ENCODE measurements at regions of chr22 and their contacts with region 1.

Region 1: DNA sequence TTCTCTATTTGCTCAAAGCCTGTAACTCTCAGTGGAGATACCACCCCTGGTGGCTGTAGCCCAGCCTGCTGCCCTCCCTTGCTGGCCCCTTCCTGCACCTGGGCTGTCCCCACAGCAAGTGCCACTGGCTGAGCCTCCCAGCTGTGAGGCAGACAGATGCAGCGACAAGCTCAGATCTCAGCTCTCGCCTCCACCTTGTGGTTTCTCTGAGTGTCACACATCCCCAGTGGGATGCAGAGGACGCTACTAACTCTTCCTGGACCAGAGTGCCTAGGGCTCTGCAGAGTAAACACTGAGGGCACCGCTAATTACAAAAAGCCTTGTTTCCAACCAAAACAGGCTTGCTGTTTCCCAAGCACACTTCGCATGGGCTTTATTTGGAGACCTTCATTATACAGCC is 8.9 kb downstream of the YPEL1 start:
- DNase-seq: peak; percentile 59
- ATAC-seq: peak; percentile 91
- H3K4me3 ChIP-seq: no peak overlapping the region
- H3K27ac ChIP-seq: no peak overlapping the region
- H3K4me1 ChIP-seq: no peaks in the 10 kb centered on the region
- H3K27me3 ChIP-seq: no peaks in the 10 kb centered on the region
- CTCF ChIP-seq: peak; percentile 61

Region 2: GRCh38 chr22:21712894-21713712 is 13.5 kb before region 1 on chr22:
- CTCF ChIA-PET with region 1: no interaction called
- POLR2A ChIA-PET with region 1: no interaction called
- intact Hi-C with region 1: loop called (anchors 2 kb)
- DNase-seq: peak; percentile 73
- ATAC-seq: peak; percentile 83
- H3K4me3 ChIP-seq: peak overlapping the region; percentile 19; the same call in 1 of the 2 replicates
- H3K27ac ChIP-seq: no peak overlapping the region
- H3K4me1 ChIP-seq: peaks cover 27% of the 10 kb centered on the region
- H3K27me3 ChIP-seq: no peaks in the 10 kb centered on the region
- CTCF ChIP-seq: peak; percentile 81

Region 3: DNA sequence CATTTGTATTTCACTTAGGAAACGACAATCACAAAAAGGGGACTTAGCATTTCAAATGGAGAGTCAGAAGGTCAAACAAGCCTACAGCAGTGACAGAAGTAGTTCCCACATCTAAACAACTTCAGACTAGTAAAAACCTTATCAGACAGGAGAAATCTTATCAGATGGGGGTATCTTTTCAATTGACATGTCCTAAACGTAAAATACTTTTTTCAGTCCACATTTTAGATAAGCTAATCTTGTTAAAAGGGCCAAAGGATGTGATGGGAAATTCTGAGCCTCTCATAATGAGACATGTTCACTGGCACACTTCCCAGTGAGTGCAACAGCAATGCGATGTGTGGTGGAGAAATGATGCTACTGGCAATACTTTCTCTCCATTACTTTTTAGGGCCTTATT is 138.4 kb after region 1 on chr22:
- CTCF ChIA-PET with region 1: no interaction called
- POLR2A ChIA-PET with region 1: no interaction called
- intact Hi-C with region 1: no loop called
- DNase-seq: peak; percentile 70
- ATAC-seq: peak; percentile 18; the same call in 1 of the 2 replicates
- H3K4me3 ChIP-seq: peak overlapping the region; percentile 90
- H3K27ac ChIP-seq: no peak overlapping the region
- H3K4me1 ChIP-seq: peaks cover 17% of the 10 kb centered on the region
- H3K27me3 ChIP-seq: no peaks in the 10 kb centered on the region
- CTCF ChIP-seq: no peak

Region 4: GRCh38 chr22:21876486-21877176 is 150.0 kb after region 1 on chr22:
- CTCF ChIA-PET with region 1: interaction called, 10 read pairs
- POLR2A ChIA-PET with region 1: no interaction called
- intact Hi-C with region 1: no loop called
- DNase-seq: no peak
- ATAC-seq: no peak; the same call in 1 of the 2 replicates
- H3K4me3 ChIP-seq: no peak overlapping the region
- H3K27ac ChIP-seq: no peak overlapping the region
- H3K4me1 ChIP-seq: no peaks in the 10 kb centered on the region
- H3K27me3 ChIP-seq: no peaks in the 10 kb centered on the region
- CTCF ChIP-seq: no peak